ENCODE measurements at regions of chr4 and their contacts with region 1.

Region 1: DNA sequence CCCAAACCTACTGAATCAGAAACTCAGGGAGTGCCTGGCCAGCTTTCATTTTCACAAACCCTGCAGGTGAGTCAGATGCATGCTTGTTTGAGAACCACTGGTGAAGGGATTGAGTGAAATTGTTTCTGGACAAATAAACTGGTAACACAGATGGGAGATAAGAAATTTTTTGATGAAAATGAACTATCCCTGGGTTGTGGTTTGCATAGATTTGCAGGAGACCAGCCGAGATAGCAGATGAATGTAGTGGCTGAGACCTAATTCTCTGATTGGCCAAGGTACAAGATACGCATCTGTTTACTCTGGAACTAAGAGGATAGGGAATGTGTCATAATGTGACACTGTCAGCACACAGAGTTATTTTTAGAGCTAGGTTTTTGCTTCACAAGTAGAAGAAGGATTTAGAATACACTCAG is 117.8 kb upstream of the NOCT start:
- DNase-seq: peak; percentile 50 to 92
- H3K4me3 ChIP-seq: peak overlapping the region; percentile 23; the same call in 1 of the 2 replicates
- H3K27ac ChIP-seq: peak overlapping the region; percentile 82
- H3K4me1 ChIP-seq: peaks cover 24% of the 10 kb centered on the region
- H3K27me3 ChIP-seq: no peaks in the 10 kb centered on the region
- CTCF ChIP-seq: no peak

Region 2: DNA sequence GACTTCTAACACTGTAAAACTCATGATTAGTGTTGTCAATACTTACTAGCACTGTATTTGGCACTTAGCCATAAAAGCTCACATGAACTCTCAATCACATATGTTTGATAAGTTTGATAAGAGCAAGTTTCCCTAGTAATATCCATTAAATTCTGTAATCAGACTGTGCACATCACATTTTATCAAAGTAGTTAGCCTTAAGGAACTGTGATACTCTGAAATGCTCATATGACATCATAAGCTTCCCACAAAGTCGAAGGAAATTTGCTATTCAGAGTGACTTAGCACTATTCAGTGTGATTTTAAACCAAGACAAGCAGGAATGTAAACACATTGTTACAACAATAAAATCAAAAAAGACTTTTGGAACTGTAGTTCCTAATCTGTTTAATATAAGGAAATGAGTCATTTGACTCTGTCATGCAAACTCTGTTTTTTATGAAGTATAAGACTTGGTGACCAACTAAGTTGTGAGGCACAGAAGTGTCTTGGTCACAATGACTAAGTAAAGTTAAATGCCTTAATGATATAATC is 662.3 kb before region 1 on chr4:
- CTCF ChIA-PET with region 1: no interaction called
- POLR2A ChIA-PET with region 1: no interaction called
- intact Hi-C with region 1: loop called (anchors 5 kb)
- DNase-seq: peak in 1 of 2 experiments; percentile 95
- H3K4me3 ChIP-seq: peak overlapping the region; percentile 53; the same call in 1 of the 2 replicates
- H3K27ac ChIP-seq: peak overlapping the region; percentile 100
- H3K4me1 ChIP-seq: peaks cover 52% of the 10 kb centered on the region
- H3K27me3 ChIP-seq: no peaks in the 10 kb centered on the region
- CTCF ChIP-seq: no peak

Region 3: GRCh38 chr4:138736362-138736761 is 161.5 kb before region 1 on chr4:
- CTCF ChIA-PET with region 1: no interaction called
- POLR2A ChIA-PET with region 1: no interaction called
- intact Hi-C with region 1: no loop called
- DNase-seq: no peak
- H3K4me3 ChIP-seq: no peak overlapping the region
- H3K27ac ChIP-seq: no peak overlapping the region
- H3K4me1 ChIP-seq: peaks cover 9% of the 10 kb centered on the region
- H3K27me3 ChIP-seq: no peaks in the 10 kb centered on the region
- CTCF ChIP-seq: no peak

Region 4: DNA sequence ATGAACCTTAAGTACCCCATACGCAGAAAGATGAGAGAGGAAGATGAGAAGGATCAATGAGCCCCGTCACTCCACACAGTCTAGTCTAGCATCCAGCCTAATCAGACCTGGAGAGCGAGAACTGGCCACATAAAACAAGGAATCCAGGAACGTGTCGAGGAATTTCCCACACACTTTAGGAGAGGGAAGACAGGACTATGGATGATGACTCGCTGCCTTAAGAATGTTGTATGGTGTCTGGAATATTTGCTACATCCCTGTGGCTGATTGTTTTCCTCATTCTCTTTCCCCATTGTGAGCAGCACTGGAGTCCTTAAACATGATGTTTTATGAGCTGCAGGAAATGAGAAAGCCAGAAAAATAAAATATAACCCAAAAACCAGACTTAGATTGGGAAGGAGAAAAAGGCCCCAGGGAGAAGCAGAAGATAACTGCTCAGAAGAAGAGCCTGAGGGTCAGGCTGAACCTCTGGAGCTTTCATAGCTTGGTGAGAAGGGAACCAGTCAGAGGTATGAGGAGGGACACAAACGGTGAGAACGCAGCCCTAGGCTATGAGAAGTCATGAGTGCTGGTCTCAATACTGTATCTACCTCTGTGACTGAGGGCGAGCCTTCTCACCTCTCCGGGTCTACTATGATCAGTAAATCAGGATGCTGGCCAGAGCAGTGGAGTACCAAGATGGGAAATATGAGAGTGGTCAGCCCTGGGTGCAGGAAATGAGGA is 21.8 kb before region 1 on chr4:
- CTCF ChIA-PET with region 1: no interaction called
- POLR2A ChIA-PET with region 1: interaction called, 8 read pairs
- intact Hi-C with region 1: loop called (anchors 1 kb)
- DNase-seq: peak; percentile 31 to 60
- H3K4me3 ChIP-seq: no peak overlapping the region
- H3K27ac ChIP-seq: no peak overlapping the region
- H3K4me1 ChIP-seq: peaks cover 7% of the 10 kb centered on the region
- H3K27me3 ChIP-seq: no peaks in the 10 kb centered on the region
- CTCF ChIP-seq: no peak

Region 5: DNA sequence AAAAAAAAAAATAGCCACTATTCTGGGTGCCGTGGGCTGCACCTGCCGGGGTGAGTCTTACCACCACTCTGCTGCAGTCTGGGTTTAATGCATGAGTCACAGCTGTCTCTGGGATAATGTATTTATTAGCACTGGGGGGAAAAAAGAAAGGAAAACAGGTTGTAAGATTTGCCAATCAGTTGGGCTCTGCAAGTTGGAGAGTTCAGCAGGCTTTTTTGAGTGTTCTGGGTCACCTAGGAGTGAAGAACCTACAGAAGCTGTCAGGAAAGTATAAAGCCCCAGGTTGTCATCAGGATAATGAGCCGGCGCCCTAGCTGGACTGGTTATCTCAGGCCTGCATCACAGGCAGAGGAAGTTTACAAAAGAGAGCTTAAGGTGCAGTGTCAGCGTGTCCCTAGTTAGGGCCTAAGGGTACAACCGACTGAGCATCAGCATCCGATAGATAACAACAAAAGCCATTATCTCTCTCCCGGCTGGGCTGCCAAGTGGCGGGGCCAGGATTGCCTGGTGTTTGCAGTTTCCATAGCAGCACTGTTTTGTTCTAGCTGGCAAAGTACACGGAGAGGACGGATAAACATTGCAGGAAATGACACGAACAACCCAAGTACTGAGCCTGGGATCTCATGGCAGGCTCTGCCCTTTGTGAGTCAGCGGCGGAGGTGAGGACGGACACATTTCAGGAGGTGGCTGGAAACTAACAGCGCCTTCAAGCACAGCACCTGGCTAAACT is 13.0 kb after region 1 on chr4:
- CTCF ChIA-PET with region 1: no interaction called
- POLR2A ChIA-PET with region 1: no interaction called
- intact Hi-C with region 1: loop called (anchors 1 kb)
- DNase-seq: peak; percentile 79 to 88
- H3K4me3 ChIP-seq: peak overlapping the region; percentile 41; the same call in 1 of the 2 replicates
- H3K27ac ChIP-seq: peak overlapping the region; percentile 66
- H3K4me1 ChIP-seq: peaks cover 27% of the 10 kb centered on the region
- H3K27me3 ChIP-seq: no peaks in the 10 kb centered on the region
- CTCF ChIP-seq: no peak

Region 6: GRCh38 chr4:138939954-138940353 is 42.1 kb after region 1 on chr4:
- CTCF ChIA-PET with region 1: no interaction called
- POLR2A ChIA-PET with region 1: no interaction called
- intact Hi-C with region 1: no loop called
- DNase-seq: no peak
- H3K4me3 ChIP-seq: no peak overlapping the region
- H3K27ac ChIP-seq: no peak overlapping the region
- H3K4me1 ChIP-seq: peaks cover 1% of the 10 kb centered on the region; the same call in 1 of the 2 replicates
- H3K27me3 ChIP-seq: no peaks in the 10 kb centered on the region
- CTCF ChIP-seq: no peak

Measured in PC-9 (cell line).